Heart left ventricle (tissue), 16 donors: ENCODE measurements at regions of chr1 and their contacts with region 1.

Region 1: GRCh38 chr1:116748272-116748671 is 6.0 kb upstream of the CD2 start:
- DNase-seq: no peak
- ATAC-seq: no peak
- H3K4me3 ChIP-seq: no peak overlapping the region
- H3K27ac ChIP-seq: no peak overlapping the region
- H3K4me1 ChIP-seq: peaks cover 0 to 25% (median 0%) of the 10 kb centered on the region in 12 donors
- H3K27me3 ChIP-seq: no peaks in the 10 kb centered on the region
- CTCF ChIP-seq: no peak
- POLR2A ChIP-seq: no peak

Region 2: DNA sequence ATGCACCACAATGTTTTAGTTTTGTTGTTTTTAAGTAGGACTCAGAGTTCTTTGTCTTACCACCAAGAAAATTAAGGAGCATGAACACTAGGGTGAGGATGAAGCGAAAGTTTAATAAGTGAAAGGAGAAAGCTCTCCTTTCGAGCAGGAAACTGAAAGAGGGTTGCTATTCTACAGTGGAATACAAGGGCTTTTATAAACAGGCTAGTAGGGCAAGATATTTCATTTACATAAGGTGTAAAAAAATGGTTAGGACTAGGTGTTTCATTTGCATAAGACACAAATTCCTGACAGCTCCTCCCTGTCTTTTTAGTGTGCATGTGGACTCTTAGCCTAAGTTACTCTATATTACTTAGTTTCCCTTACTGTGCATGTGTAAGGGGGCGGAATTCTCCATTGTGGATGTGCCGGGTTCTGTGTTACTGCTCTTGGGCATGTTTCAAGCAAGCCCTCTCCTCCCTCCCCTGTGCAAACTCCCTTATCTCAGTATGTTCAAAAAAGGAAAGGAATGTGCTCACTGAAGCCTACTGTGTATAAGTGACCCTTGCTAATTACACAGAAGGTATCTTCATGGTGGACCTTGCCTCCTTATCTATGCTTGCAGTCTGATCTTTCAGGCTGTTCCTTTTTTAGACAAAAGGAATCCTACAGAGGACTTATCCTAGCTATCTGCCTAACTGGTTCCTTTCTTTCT is 1711.3 kb before region 1 on chr1:
- intact Hi-C with region 1: no loop called
- DNase-seq: no peak
- ATAC-seq: peak in 2 of 4 donors; percentile 52 to 67
- H3K4me3 ChIP-seq: no peak overlapping the region
- H3K27ac ChIP-seq: no peak overlapping the region
- H3K4me1 ChIP-seq: peaks cover 0 to 7% (median 0%) of the 10 kb centered on the region in 12 donors
- H3K27me3 ChIP-seq: no peaks in the 10 kb centered on the region
- CTCF ChIP-seq: no peak
- POLR2A ChIP-seq: no peak

Region 3: GRCh38 chr1:116806245-116806644 is 58.0 kb after region 1 on chr1:
- intact Hi-C with region 1: loop called in 1 of 10 experiments (anchors 5 kb)
- DNase-seq: no peak
- ATAC-seq: no peak
- H3K4me3 ChIP-seq: no peak overlapping the region
- H3K27ac ChIP-seq: peak overlapping the region in 1 of 12 donors; percentile 77
- H3K4me1 ChIP-seq: peaks cover 0 to 6% (median 0%) of the 10 kb centered on the region in 12 donors
- H3K27me3 ChIP-seq: peaks cover 0 to 2% (median 0%) of the 10 kb centered on the region in 9 donors
- CTCF ChIP-seq: no peak
- POLR2A ChIP-seq: no peak

Region 4: DNA sequence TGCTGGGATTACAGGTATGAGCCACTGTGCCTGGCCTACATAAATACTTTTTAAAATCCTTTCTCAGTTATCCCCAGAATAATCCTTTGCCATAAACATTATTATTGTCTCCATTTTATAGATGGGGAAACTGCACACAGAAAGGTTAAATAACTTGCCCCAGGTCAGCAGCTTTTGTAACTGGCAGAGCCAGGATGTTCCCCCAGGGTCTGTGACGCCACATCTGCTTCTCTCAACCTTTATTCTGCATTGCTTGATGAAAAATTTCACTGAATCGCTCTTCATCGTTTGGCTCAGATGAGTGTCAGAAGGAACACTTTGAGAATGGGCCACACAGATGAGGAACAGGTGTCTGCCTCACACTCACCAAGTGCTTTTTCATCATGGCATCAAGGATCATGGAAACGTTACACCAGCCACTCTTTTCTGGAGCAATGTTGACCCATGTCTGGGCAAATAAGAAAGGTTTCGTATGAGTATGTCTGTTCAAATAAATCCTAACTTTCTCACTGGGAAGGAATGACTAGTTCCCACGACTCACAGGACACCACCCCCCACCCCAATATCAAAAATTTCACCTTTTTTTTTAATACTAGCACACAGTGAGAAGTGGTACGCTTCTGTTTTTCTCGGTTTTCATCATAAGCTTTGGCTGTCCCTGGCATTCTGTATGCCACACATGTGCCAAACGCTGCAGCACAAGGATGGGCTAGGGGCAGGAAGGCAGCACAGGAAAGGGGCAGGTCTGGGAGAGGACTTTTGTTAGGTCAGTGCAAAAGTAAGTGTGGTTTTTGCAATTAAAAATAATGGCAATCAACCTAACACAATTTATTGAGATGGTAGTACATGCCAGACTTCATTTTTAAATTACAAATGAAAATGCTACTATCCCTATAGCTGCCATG is 152.4 kb after region 1 on chr1:
- intact Hi-C with region 1: no loop called
- DNase-seq: no peak
- ATAC-seq: no peak
- H3K4me3 ChIP-seq: no peak overlapping the region
- H3K27ac ChIP-seq: no peak overlapping the region
- H3K4me1 ChIP-seq: no peaks in the 10 kb centered on the region
- H3K27me3 ChIP-seq: no peaks in the 10 kb centered on the region
- CTCF ChIP-seq: no peak
- POLR2A ChIP-seq: no peak